ENCODE measurements at regions of chr1 and their contacts with region 1.

Region 1: GRCh38 chr1:65309304-65310077 is at the start of gene DNAJC6:
- DNase-seq: peak; percentile 53
- H3K4me3 Mint-ChIP-seq: peak within 1 kb of the TSS; percentile 78
- H3K27ac Mint-ChIP-seq: peak within 1 kb of the TSS; percentile 23
- H3K4me1 Mint-ChIP-seq: peaks cover 13% of the 10 kb centered on the region
- H3K27me3 Mint-ChIP-seq: peaks cover 49% of the 10 kb centered on the region
- total RNA-seq, gene DNAJC6: 4.4 and 6.2 TPM in 2 replicates

Region 2: GRCh38 chr1:65265651-65266351 is 43.7 kb before region 1 on chr1:
- intact Hi-C with region 1: loop called (anchors 5 kb)
- DNase-seq: peak; percentile 16
- H3K4me3 Mint-ChIP-seq: peak overlapping the region; percentile 71
- H3K27ac Mint-ChIP-seq: no peak overlapping the region
- H3K4me1 Mint-ChIP-seq: peaks cover 36% of the 10 kb centered on the region
- H3K27me3 Mint-ChIP-seq: peaks cover 15% of the 10 kb centered on the region

Region 3: GRCh38 chr1:65429806-65430205 is 120.3 kb after region 1 on chr1:
- intact Hi-C with region 1: no loop called
- DNase-seq: no peak
- H3K4me3 Mint-ChIP-seq: no peak overlapping the region
- H3K27ac Mint-ChIP-seq: no peak overlapping the region
- H3K4me1 Mint-ChIP-seq: peaks cover 41% of the 10 kb centered on the region
- H3K27me3 Mint-ChIP-seq: no peaks in the 10 kb centered on the region

Measured in activated T-helper 1 cell treated with anti-CD3 and anti-CD28 coated beads, Interleukin-12 subunit alpha, Interleukin-12 subunit beta, Interleukin-2, Interleukin-4 antibody, amounts not matched to agents 30 ng/mL and 10 ng/mL and 1 ng/mL, durations not matched to agents 14 hours and 24 hours and 36 hours (primary cell).